Astrocyte of the cerebellum (primary cell): ENCODE measurements at regions of chr1 and their contacts with region 1.

Region 1: DNA sequence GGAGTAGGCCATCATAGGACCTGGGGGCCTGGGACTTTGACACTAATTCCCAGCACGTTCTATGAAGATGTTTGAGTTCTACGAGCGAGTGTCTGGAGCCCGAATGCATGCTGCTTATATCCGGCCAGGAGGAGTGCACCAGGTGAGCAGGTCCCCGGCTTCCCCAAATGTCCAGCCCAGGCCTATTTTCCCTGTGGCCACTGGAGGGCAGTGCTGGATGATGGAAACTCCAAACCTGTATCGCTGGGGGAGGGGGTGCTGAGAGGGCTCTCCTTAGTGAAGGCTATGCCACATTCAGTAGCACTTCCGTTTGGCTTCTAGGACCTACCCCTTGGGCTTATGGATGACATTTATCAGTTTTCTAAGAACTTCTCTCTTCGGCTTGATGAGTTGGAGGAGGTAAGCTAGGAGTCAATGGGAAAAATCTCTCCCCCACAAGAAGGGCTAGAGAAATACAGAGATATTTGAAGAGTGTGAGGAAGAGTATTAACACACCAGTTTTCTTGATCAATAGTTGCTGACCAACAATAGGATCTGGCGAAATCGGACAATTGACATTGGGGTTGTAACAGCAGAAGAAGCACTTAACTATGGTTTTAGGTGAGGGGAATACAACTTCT is 5.2 kb upstream of the FCER1G start:
- DNase-seq: peak; percentile 47
- H3K4me3 ChIP-seq: no peak overlapping the region
- CTCF ChIP-seq: peak; percentile 98

Region 2: GRCh38 chr1:161166669-161167548 is 43.0 kb before region 1 on chr1:
- in situ Hi-C with region 1: no loop called
- DNase-seq: no peak
- H3K4me3 ChIP-seq: peak overlapping the region; percentile 83
- CTCF ChIP-seq: no peak

Region 3: GRCh38 chr1:161261261-161262235 is 51.6 kb after region 1 on chr1:
- in situ Hi-C with region 1: no loop called
- DNase-seq: no peak
- H3K4me3 ChIP-seq: no peak overlapping the region
- CTCF ChIP-seq: no peak

Region 4: GRCh38 chr1:161304927-161305866 is 95.3 kb after region 1 on chr1:
- in situ Hi-C with region 1: loop called (anchors 5 kb)
- DNase-seq: no peak
- H3K4me3 ChIP-seq: peak overlapping the region; percentile 64
- CTCF ChIP-seq: no peak

Region 5: DNA sequence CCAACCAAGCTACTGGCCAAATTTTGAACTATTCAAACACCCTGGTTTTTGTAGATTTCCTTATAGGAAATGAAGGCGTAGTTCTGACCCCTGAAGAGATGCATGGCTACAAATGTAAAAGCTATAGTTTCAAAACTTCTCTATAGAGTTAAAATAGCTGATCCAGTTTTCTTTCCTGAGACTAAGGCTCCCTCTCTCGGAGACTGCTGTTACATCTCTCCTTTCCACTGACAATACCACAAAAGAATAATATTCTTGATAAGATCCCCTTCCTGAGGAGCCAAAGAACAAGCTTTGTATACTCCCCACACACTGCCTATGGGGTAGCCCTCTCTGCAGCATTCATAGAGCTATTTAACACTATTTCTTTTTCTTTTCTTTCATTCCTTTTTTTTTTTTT is 164.5 kb after region 1 on chr1:
- in situ Hi-C with region 1: loop called (anchors 5 kb)
- DNase-seq: no peak
- H3K4me3 ChIP-seq: no peak overlapping the region
- CTCF ChIP-seq: peak; percentile 22